ENCODE measurements at regions of chr9 and their contacts with region 1.

Region 1: GRCh38 chr9:33167046-33167808 is at the start of gene B4GALT1:
- DNase-seq: peak; percentile 95 to 99
- ATAC-seq: peak; percentile 68 to 90 (median 85)
- H3K4me3 ChIP-seq: peak within 1 kb of the TSS; percentile 45 to 100 (median 96)
- H3K27ac ChIP-seq: peak within 1 kb of the TSS; percentile 92 to 100 (median 100)
- H3K4me1 ChIP-seq: peaks cover 24 to 70% (median 60%) of the 10 kb centered on the region in 9 donors
- H3K27me3 ChIP-seq: no peaks in the 10 kb centered on the region
- CTCF ChIP-seq: peak in 5 of 9 donors; percentile 11 to 41 (median 16)
- total RNA-seq, gene B4GALT1: 30.0 to 117 (median 43.1) TPM

Region 2: GRCh38 chr9:33081128-33081851 is 85.9 kb before region 1 on chr9:
- intact Hi-C with region 1: loop called in 9 of 10 experiments (anchors 1 to 5 kb)
- DNase-seq: peak in 1 of 2 donors; percentile 82
- ATAC-seq: peak; percentile 33 to 77 (median 68)
- H3K4me3 ChIP-seq: peak overlapping the region in 3 of 10 donors; percentile 10 to 23 (median 16)
- H3K27ac ChIP-seq: peak overlapping the region in 8 of 10 donors; percentile 3 to 72 (median 45)
- H3K4me1 ChIP-seq: peaks cover 0 to 38% (median 19%) of the 10 kb centered on the region in 9 donors
- H3K27me3 ChIP-seq: no peaks in the 10 kb centered on the region
- CTCF ChIP-seq: peak; percentile 71 to 91 (median 77)

Region 3: DNA sequence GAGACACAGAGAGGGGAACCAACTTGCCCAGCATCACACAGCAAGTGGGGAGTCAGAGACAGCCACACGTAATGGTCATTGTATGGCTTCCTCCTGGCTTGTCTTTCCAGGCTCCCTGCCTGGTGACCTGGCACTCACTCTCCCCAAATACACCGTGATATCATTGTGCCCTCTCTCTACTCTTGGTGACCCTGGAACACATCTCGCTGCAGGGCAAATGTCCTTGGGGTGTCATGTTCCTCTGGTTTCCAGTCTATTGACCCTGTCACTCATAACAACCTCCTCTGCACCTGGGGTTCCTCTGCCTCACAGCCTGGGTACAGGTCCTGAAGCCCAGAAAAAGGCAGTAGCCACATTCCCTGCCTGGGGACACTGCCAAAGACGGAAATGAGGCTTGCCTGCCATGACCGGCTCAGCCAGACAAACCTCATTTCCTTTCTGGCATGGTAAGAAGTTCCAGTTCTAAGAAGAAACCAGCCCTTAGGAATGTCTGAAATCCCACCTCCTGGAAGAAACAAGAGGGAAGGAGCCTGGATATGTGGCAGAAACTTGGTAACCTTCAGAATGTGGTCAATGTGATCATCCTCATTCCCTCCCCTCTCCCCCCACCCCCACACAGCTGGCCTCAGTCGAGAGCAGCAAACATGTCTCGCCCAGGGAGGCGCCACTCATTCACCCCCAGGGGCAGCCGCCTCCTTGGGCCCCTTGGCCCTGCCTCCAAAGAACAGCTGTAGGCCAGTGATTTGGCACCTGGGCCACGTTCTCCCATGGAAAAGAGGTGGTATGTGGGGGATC is 60.2 kb before region 1 on chr9:
- intact Hi-C with region 1: loop called in 5 of 10 experiments (anchors 2 to 10 kb)
- DNase-seq: peak; percentile 42 to 78
- ATAC-seq: peak; percentile 60 to 85 (median 72)
- H3K4me3 ChIP-seq: peak overlapping the region in 1 of 10 donors; percentile 1
- H3K27ac ChIP-seq: peak overlapping the region; percentile 9 to 95 (median 82)
- H3K4me1 ChIP-seq: peaks cover 5 to 61% (median 31%) of the 10 kb centered on the region in 9 donors
- H3K27me3 ChIP-seq: no peaks in the 10 kb centered on the region
- CTCF ChIP-seq: no peak

Region 4: GRCh38 chr9:33124751-33125381 is 42.4 kb before region 1 on chr9:
- intact Hi-C with region 1: loop called in 5 of 10 experiments (anchors 5 kb)
- DNase-seq: no peak
- ATAC-seq: peak in 5 of 8 donors; percentile 22 to 42 (median 30)
- H3K4me3 ChIP-seq: no peak overlapping the region
- H3K27ac ChIP-seq: peak overlapping the region in 8 of 10 donors; percentile 16 to 61 (median 44)
- H3K4me1 ChIP-seq: peaks cover 5 to 57% (median 43%) of the 10 kb centered on the region in 9 donors
- H3K27me3 ChIP-seq: no peaks in the 10 kb centered on the region
- CTCF ChIP-seq: peak in 4 of 9 donors; percentile 7 to 43 (median 33)

Region 5: DNA sequence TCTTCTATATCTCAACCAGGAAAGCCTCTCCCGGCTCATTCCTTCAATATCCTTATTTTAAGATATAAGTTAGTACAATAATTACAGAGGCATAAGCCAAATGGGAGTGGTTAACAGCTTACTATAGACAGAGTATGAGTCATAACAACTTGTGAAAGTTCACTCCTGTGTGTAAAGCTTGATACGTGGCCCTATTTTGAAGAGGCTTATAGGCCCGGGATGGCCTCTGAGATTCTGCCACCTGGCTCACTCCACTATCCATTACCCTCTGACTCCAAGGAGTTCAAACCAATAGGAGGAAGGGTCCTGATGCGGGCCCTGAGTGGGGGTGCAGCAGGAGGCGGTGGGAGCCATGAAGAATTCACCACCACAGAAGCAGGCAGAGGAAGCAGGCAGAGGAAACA is 36.7 kb before region 1 on chr9:
- intact Hi-C with region 1: loop called in 4 of 10 experiments (anchors 5 kb)
- DNase-seq: no peak
- ATAC-seq: peak in 4 of 8 donors; percentile 3 to 48 (median 38)
- H3K4me3 ChIP-seq: no peak overlapping the region
- H3K27ac ChIP-seq: peak overlapping the region in 6 of 10 donors; percentile 1 to 69 (median 38)
- H3K4me1 ChIP-seq: peaks cover 19 to 91% (median 81%) of the 10 kb centered on the region in 9 donors
- H3K27me3 ChIP-seq: no peaks in the 10 kb centered on the region
- CTCF ChIP-seq: no peak

Region 6: DNA sequence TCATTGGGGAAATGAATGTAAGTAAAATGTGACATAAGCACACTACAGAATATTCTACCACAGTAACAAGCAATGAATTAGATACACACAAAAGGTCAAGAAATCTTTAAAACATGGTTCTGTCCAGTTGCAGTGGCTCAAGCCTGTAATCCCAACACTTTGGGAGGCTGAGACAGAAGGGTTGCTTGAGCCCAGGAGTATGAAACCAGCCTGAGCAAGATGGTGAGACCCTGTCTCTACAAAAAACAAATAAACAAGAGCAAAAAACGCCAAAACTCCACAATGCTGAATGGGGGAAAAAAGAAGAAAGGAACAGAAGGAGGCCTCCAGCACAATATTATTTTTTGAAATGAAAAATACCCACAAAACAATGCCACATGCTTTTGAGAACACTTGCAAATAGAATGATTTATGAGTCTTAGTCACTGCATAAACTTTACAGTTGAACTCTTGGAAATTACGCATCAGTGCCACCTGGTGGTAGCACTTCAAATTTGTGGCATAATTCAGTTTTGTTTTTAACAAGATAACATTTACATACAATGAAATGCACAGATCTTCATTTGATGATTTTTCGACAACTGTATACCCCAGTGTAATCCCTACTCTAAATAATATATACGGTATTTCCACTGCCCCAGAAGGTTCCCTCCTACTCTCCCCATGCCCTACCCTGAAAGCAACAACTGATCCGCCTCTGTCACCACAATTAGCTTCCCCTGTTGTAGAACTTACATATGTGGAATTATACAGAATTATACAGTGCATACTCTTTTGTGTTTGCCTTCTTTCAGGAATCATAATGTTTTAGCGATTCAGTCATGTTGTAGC is 58.3 kb after region 1 on chr9:
- intact Hi-C with region 1: loop called in 8 of 10 experiments (anchors 2 to 10 kb)
- DNase-seq: peak in 1 of 2 donors; percentile 68
- ATAC-seq: peak in 6 of 8 donors; percentile 34 to 68 (median 48)
- H3K4me3 ChIP-seq: no peak overlapping the region
- H3K27ac ChIP-seq: peak overlapping the region in 2 of 10 donors; percentile 0 to 77
- H3K4me1 ChIP-seq: peaks cover 0 to 30% (median 4%) of the 10 kb centered on the region in 9 donors
- H3K27me3 ChIP-seq: no peaks in the 10 kb centered on the region
- CTCF ChIP-seq: peak; percentile 47 to 85 (median 78)

Measured in heart right ventricle (tissue), 16 donors.